MCF 10A (cell line): ENCODE measurements at regions of chr12 and their contacts with region 1.

Region 1: DNA sequence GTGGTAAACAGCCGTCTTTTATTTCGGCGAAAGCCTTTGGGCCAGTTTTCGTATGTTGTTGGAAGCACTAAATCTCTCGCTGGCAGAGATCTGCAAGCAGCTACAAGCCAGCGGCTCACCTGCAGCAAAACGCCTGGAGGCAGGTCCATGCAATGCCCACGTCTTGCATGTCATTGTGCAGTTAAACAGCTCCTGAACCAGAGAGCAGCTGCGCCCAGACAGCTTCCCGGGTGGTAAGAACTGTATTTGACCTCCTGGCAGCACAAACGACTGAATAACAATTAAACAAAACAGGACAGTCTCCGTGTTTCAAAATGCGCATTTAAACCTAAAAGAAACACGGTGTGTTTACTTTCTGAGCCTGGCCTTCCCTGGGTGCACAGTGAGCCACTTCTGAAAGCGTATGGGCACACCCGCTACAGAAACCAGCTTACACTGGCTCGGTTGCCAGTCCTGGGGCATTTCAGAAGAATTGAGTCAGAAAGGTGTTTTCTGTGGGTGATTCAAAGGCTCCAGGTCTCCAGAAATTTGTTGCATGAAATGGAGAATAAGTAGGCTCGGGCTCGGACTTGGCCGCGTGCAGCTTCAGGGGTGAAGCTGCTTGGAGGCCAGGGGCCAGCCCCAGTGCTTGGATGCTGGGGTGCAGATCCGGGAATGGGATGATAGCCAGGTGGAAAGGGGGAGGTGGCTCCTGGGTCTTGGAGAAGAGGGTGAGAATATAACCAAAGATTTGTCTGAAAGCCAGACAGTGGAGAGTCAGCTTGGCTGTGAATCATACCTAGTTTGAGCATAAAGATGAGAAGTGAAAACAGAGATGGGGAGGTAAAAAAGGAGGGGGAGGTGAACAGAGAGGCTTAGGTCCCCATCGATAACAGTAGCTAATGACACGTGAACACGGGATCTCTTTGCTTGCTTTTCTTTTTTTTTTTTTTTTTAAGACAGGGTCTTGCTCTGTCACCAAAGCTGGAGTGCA is 24.9 kb upstream of the FZD10 start:
- DNase-seq: peak; percentile 69
- H3K4me3 Mint-ChIP-seq: peak overlapping the region; percentile 29
- H3K27ac Mint-ChIP-seq: peak overlapping the region; percentile 82
- H3K4me1 Mint-ChIP-seq: peaks cover 16% of the 10 kb centered on the region
- H3K27me3 Mint-ChIP-seq: no peaks in the 10 kb centered on the region
- CTCF ChIP-seq: no peak

Region 2: DNA sequence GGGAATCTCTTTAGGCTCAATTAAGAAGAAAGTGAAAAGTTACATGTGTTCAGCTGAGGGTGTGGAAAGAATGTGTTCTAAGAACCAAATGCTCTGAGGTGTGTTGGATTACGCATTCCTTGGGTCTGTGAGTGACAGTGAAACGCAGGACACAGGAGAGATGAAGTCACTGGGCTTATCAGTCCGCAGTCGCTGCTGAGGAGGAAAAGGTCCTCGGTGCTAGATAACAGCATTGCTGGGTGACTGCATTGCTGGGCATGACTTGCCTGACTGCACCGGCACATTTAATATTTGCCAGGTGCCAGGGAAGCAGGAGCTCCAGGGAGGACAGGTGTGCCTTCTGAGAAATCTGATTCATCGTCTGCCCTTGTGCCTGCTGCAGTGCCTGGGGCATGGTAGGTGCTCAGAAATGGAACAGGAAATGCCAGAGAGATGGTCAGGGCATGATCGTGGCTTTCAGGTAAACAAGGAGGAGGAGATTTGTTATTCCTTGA is 39.5 kb before region 1 on chr12:
- CTCF ChIA-PET with region 1: no interaction called
- POLR2A ChIA-PET with region 1: interaction called, 14 read pairs
- intact Hi-C with region 1: no loop called
- DNase-seq: peak; percentile 80
- H3K4me3 Mint-ChIP-seq: peak overlapping the region; percentile 14
- H3K27ac Mint-ChIP-seq: peak overlapping the region; percentile 83
- H3K4me1 Mint-ChIP-seq: peaks cover 9% of the 10 kb centered on the region
- H3K27me3 Mint-ChIP-seq: no peaks in the 10 kb centered on the region
- CTCF ChIP-seq: no peak

Region 3: DNA sequence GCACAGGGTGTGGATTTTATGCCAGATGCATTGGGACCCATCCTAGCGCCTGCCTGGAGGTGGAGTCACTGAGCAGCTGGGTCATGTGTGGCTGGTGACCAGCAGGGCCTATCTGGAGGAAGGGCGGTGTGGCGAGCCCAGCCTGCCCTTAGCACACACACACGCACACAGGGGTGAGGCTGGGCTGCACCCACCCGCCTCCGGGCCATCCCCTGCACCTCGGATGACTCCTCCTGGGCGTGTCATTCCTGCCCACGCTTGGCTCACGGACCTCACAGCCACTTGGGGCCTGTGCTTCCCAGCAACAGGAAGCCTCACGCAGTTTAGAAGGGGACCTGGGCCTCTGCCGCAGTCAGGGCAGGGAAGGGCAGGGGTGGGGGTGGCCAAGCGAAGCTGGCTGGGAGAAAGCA is 11.3 kb before region 1 on chr12:
- CTCF ChIA-PET with region 1: interaction called, 4 read pairs
- POLR2A ChIA-PET with region 1: interaction called, 11 read pairs
- intact Hi-C with region 1: no loop called
- DNase-seq: peak; percentile 78
- H3K4me3 Mint-ChIP-seq: no peak overlapping the region
- H3K27ac Mint-ChIP-seq: no peak overlapping the region
- H3K4me1 Mint-ChIP-seq: peaks cover 10% of the 10 kb centered on the region
- H3K27me3 Mint-ChIP-seq: no peaks in the 10 kb centered on the region
- CTCF ChIP-seq: no peak